ENCODE measurements at regions of chr4 and their contacts with region 1.

Region 1: GRCh38 chr4:108433832-108434231 is 186.5 kb upstream of the RPL34 start:
- DNase-seq: no peak
- H3K4me3 ChIP-seq: no peak overlapping the region
- H3K27ac ChIP-seq: no peak overlapping the region
- H3K4me1 ChIP-seq: no peaks in the 10 kb centered on the region
- H3K27me3 ChIP-seq: no peaks in the 10 kb centered on the region
- CTCF ChIP-seq: no peak
- POLR2A ChIP-seq: no peak

Region 2: DNA sequence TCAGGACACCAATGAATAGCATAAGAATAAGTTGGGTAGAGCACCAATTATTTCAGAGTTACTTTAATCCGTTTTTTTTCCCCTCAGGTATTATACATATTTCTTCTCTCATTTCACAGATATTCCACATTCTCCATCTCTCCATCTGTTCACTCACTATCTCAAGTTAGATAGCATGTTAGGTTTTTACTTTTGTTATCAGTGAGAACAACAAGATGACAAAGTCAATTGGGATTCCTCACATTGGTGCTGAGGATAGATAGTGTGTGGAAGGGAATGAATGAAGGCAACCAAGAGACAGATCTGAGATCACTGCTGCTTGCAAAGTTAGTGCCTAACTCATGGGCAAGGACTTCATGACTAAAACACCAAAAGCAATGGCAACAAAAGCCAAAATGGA is 441.0 kb after region 1 on chr4:
- intact Hi-C with region 1: loop called (anchors 5 kb)
- DNase-seq: no peak
- H3K4me3 ChIP-seq: no peak overlapping the region
- H3K27ac ChIP-seq: no peak overlapping the region
- H3K4me1 ChIP-seq: no peaks in the 10 kb centered on the region
- H3K27me3 ChIP-seq: no peaks in the 10 kb centered on the region
- CTCF ChIP-seq: no peak
- POLR2A ChIP-seq: no peak